OCI-LY7 (cell line): ENCODE measurements at regions of chr13 and their contacts with region 1.

Region 1: DNA sequence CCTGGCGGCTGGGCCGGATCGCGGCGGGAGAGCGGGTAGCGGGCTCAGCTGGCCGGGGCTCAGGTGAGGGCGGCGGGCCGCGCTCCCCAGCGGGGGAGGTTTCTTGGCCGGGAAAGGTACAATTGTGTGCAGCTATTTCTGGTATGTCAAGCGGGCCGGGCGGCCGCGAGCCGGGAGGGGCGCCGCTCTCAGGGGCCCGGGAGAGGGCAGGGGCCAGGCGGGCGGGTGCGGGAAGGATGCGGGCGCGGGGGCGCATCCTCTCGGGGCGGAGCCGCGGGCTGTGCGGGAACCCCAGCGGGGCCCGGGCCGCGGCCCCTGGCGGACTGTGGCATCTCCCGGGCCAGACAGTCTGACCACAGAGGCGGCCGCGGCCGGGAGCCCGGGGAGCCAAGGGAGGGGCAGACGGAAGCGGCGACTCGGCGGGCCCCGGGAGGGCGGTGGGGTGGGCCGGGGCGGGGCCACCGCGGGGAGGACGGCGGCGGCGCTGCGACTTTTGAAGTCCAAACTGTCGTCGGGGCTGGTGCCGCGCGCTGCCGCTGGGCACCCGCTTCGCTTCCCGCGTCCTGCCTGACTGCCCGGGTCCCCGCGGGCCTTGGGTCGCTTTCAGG is at the start of gene LMO7:
- DNase-seq: peak; percentile 58
- H3K4me3 ChIP-seq: peak within 1 kb of the TSS; percentile 71
- H3K27ac ChIP-seq: no peak within 1 kb of the TSS
- H3K4me1 ChIP-seq: peaks cover 23% of the 10 kb centered on the region
- CTCF ChIP-seq: no peak
- total RNA-seq, gene LMO7: 21.4 and 33.6 TPM in 2 replicates

Region 2: DNA sequence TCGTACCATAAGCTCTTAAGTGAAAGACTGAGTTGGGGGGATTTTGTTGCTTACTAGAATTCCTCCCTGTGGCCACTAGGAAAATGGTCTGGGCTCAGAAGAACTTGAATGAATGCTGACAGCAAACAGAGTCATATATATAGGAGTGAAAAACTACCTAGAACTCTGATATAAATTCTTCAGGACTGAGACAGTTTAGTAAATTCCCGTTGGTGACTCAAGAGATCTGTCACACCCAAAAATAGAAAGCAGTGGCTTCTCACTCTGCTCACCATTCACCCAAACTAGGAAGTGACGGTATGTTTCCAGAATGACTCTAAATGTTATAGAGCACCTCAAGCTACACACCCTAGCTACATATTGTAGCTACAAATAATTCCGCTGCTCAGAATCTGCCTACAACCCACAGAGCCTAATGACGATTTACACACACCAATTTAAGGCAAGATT is 270.2 kb before region 1 on chr13:
- CTCF ChIA-PET with region 1: no interaction called
- POLR2A ChIA-PET with region 1: no interaction called
- intact Hi-C with region 1: loop called (anchors 5 kb)
- DNase-seq: peak; percentile 17
- H3K4me3 ChIP-seq: no peak overlapping the region
- H3K27ac ChIP-seq: no peak overlapping the region
- H3K4me1 ChIP-seq: peaks cover 49% of the 10 kb centered on the region
- CTCF ChIP-seq: 0 out of 2 replicates have a peak, but pooled peaks have one; percentile 22